ENCODE measurements at regions of chr22 and their contacts with region 1.

Region 1: GRCh38 chr22:37199760-37200108 is 11.7 kb upstream of the C1QTNF6 start:
- DNase-seq: no peak
- ATAC-seq: peak; percentile 6
- H3K4me3 ChIP-seq: peak overlapping the region; percentile 11
- H3K4me1 ChIP-seq: peaks cover 30% of the 10 kb centered on the region
- CTCF ChIP-seq: no peak

Region 2: GRCh38 chr22:37154925-37155712 is 44.6 kb before region 1 on chr22:
- intact Hi-C with region 1: loop called in 1 of 2 experiments (anchors 10 kb)
- DNase-seq: no peak
- ATAC-seq: no peak
- H3K4me3 ChIP-seq: no peak overlapping the region
- H3K4me1 ChIP-seq: no peaks in the 10 kb centered on the region
- CTCF ChIP-seq: no peak

Measured in mucosa of descending colon (tissue), 3 donors.